Activated CD8-positive, alpha-beta T cell treated with anti-CD3 and anti-CD28 coated beads for 36 hours (primary cell): ENCODE measurements at regions of chr3 and their contacts with region 1.

Region 1: GRCh38 chr3:195385526-195385925 is 57.3 kb downstream of the ACAP2 start:
- DNase-seq: no peak
- ATAC-seq: no peak
- H3K4me3 Mint-ChIP-seq: no peak overlapping the region
- H3K27ac Mint-ChIP-seq: no peak overlapping the region
- H3K4me1 Mint-ChIP-seq: peaks cover 39% of the 10 kb centered on the region
- H3K27me3 Mint-ChIP-seq: no peaks in the 10 kb centered on the region
- CTCF ChIP-seq: no peak

Region 2: GRCh38 chr3:195195321-195196209 is 190.0 kb before region 1 on chr3:
- CTCF ChIA-PET with region 1: no interaction called
- POLR2A ChIA-PET with region 1: no interaction called
- intact Hi-C with region 1: no loop called
- DNase-seq: no peak
- ATAC-seq: no peak
- H3K4me3 Mint-ChIP-seq: no peak overlapping the region
- H3K27ac Mint-ChIP-seq: no peak overlapping the region
- H3K4me1 Mint-ChIP-seq: peaks cover 27% of the 10 kb centered on the region
- H3K27me3 Mint-ChIP-seq: no peaks in the 10 kb centered on the region
- CTCF ChIP-seq: no peak

Region 3: GRCh38 chr3:195407531-195408409 is 22.2 kb after region 1 on chr3:
- CTCF ChIA-PET with region 1: no interaction called
- POLR2A ChIA-PET with region 1: interaction called, 10 read pairs
- intact Hi-C with region 1: no loop called
- DNase-seq: no peak
- ATAC-seq: peak; percentile 67
- H3K4me3 Mint-ChIP-seq: peak overlapping the region; percentile 54
- H3K27ac Mint-ChIP-seq: peak overlapping the region; percentile 71
- H3K4me1 Mint-ChIP-seq: peaks cover 58% of the 10 kb centered on the region
- H3K27me3 Mint-ChIP-seq: no peaks in the 10 kb centered on the region
- CTCF ChIP-seq: no peak

Region 4: GRCh38 chr3:195425849-195426248 is 40.3 kb after region 1 on chr3:
- CTCF ChIA-PET with region 1: no interaction called
- POLR2A ChIA-PET with region 1: no interaction called
- intact Hi-C with region 1: no loop called
- DNase-seq: no peak
- ATAC-seq: peak; percentile 24
- H3K4me3 Mint-ChIP-seq: no peak overlapping the region
- H3K27ac Mint-ChIP-seq: no peak overlapping the region
- H3K4me1 Mint-ChIP-seq: peaks cover 61% of the 10 kb centered on the region
- H3K27me3 Mint-ChIP-seq: no peaks in the 10 kb centered on the region
- CTCF ChIP-seq: no peak